ENCODE measurements at regions of chr12 and their contacts with region 1.

Region 1: GRCh38 chr12:38484821-38485472 is 168.4 kb downstream of the ALG10B start:
- H3K4me3 Mint-ChIP-seq: no peak overlapping the region
- H3K27ac Mint-ChIP-seq: no peak overlapping the region
- H3K4me1 Mint-ChIP-seq: no peaks in the 10 kb centered on the region
- H3K27me3 Mint-ChIP-seq: no peaks in the 10 kb centered on the region

Region 2: GRCh38 chr12:38373784-38374183 is 111.2 kb before region 1 on chr12:
- intact Hi-C with region 1: loop called (anchors 10 kb)
- H3K4me3 Mint-ChIP-seq: no peak overlapping the region
- H3K27ac Mint-ChIP-seq: no peak overlapping the region
- H3K4me1 Mint-ChIP-seq: peaks cover 12% of the 10 kb centered on the region
- H3K27me3 Mint-ChIP-seq: no peaks in the 10 kb centered on the region